ENCODE measurements at regions of chr1 and their contacts with region 1.

Region 1: DNA sequence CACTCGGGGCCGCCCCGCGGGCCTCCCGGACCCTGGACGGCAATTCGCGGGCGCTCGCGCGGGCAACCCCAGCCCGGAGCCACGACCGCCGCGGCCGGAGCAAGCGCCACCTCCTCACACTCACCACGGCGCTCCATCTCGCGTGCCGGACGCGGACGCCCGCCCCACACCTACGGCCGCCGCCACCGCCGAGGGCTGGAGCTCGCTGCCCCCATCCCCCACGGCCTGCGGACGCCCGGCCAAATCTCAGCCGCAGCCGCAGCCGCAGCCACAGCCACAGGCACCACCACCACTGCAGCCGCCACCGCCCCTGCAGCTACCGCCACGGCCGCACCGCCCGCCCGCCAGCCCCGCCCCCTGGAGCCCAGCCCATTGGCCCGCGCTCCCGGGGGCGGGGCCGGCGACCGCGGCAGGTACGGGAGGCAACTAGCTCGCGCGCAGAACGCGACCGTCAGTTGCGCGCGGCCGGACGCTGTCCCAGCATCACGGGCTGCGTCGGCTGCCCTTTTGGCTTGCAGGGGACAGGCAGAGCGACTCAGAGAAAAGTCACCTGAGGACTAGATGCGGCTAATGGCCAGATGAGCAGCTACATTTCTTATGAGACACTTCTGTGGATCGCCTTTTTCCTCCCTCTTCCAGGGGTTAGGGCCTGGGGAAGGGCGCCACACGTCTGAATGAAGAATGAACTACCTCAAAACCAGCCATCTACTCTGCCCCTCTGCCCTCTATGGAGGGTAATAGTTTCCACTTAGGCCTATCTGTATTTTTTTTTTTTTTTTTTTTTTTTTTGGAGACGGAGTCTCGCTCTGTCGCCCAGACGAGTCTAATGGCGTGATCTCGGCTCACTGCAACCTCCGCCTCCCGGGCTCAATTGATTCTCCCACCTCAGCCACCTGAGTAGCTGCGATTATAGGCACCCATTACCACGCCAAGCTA is at the start of gene ARHGAP29:
- DNase-seq: peak; percentile 80
- H3K4me3 ChIP-seq: peak within 1 kb of the TSS; percentile 94
- H3K27ac ChIP-seq: peak within 1 kb of the TSS; percentile 88 to 93
- H3K4me1 ChIP-seq: peaks cover 3% of the 10 kb centered on the region
- H3K27me3 ChIP-seq: no peaks in the 10 kb centered on the region
- CTCF ChIP-seq: peak in 1 of 4 experiments; percentile 47
- POLR2A ChIP-seq: peak; percentile 93
- total RNA-seq, gene ARHGAP29: 27.8 to 32.9 TPM

Region 2: DNA sequence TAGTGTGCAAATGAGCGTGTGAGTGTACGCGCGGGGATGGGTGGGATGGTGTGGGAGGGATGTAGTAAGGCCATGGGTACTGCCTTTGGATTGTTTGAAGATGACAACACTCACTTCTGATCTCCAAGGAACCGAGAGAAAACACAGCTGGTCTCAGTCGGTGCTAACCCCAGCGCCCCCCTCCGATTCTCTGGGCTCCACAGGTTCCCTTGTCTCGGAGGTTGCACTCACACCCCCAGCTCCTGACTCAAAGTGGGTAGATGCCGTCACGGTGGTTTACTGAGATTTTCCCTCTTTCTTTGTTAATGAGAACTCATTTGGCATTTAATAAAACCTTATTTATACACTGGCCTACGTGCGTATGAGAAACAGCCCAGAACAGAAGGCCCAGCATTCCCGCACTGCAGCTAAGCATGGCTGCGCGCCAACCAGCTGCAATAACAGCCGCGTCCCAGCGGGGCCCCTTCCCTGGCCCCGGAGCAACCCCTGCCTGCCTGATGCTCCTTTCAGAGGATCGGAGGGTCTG is 142.4 kb before region 1 on chr1:
- intact Hi-C with region 1: loop called (anchors 10 kb)
- DNase-seq: peak; percentile 29
- H3K4me3 ChIP-seq: no peak overlapping the region
- H3K27ac ChIP-seq: peak overlapping the region; percentile 65 to 66
- H3K4me1 ChIP-seq: peaks cover 7% of the 10 kb centered on the region
- H3K27me3 ChIP-seq: no peaks in the 10 kb centered on the region
- CTCF ChIP-seq: no peak
- POLR2A ChIP-seq: no peak

Region 3: GRCh38 chr1:94329986-94330385 is 92.4 kb after region 1 on chr1:
- intact Hi-C with region 1: loop called (anchors 5 kb)
- DNase-seq: no peak
- H3K4me3 ChIP-seq: no peak overlapping the region
- H3K27ac ChIP-seq: no peak overlapping the region
- H3K4me1 ChIP-seq: peaks cover 5% of the 10 kb centered on the region
- H3K27me3 ChIP-seq: no peaks in the 10 kb centered on the region
- CTCF ChIP-seq: peak in 3 of 4 experiments; percentile 7 to 27 (median 12)
- POLR2A ChIP-seq: no peak